GM23248 (cell line): ENCODE measurements at regions of chr1 and their contacts with region 1.

Region 1: DNA sequence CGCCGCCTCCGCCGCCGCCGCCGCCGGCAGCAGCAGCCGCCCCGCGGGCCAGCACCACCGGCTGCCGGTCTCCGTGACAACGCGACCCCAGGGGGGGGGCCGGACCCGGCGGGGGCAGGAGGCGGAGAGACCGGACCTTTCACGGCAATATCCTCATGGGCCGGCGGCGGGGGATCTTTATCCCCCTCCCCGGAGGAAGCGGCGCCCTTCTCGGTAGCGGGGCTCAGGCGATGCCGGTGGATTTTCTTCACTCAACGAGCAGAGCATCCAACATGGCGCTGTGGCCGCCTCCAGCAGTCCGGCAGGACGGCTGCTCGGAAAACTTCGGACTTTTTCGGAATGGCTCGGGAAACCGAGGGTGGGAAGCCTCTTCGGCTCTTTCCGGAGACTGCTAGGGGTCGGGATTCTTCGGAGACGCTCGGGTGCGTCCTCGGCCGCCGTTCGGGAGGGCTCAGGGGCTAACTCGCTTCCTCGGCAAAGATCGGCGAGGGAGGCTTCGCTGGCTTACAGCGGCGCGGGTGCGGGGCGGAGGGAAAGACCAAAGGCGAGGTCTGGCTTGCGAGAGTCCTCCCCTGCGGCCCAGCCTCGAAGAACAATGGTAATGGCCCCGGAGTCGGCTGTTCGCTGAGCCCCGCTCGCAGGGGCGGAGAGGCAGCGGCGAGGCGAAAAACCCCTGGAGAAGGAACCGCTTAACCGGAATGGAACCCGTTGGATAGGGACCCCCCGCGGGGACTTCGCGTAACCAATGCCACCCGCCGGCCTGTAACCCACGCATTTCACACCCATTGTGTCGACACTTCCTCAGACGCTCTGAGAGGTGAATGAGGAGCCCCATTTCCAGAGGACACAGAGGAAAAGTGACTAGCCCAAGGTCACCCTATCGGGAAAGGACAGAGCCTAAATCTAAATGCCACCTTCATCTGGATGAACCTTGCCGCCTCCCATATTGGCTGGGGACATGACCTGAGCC is at the start of gene EIF4G3:
- DNase-seq: peak; percentile 99
- H3K4me3 ChIP-seq: peak within 1 kb of the TSS; percentile 89
- H3K27ac ChIP-seq: peak within 1 kb of the TSS; percentile 87
- H3K4me1 ChIP-seq: peaks cover 8% of the 10 kb centered on the region
- H3K27me3 ChIP-seq: no peaks in the 10 kb centered on the region
- total RNA-seq, gene EIF4G3: 43.1 and 65.5 TPM in 2 replicates

Region 2: GRCh38 chr1:20530906-20531305 is 646.0 kb before region 1 on chr1:
- in situ Hi-C with region 1: loop called (anchors 25 kb)
- DNase-seq: peak; percentile 40
- H3K4me3 ChIP-seq: no peak overlapping the region
- H3K27ac ChIP-seq: no peak overlapping the region
- H3K4me1 ChIP-seq: no peaks in the 10 kb centered on the region
- H3K27me3 ChIP-seq: peaks cover 38% of the 10 kb centered on the region

Region 3: DNA sequence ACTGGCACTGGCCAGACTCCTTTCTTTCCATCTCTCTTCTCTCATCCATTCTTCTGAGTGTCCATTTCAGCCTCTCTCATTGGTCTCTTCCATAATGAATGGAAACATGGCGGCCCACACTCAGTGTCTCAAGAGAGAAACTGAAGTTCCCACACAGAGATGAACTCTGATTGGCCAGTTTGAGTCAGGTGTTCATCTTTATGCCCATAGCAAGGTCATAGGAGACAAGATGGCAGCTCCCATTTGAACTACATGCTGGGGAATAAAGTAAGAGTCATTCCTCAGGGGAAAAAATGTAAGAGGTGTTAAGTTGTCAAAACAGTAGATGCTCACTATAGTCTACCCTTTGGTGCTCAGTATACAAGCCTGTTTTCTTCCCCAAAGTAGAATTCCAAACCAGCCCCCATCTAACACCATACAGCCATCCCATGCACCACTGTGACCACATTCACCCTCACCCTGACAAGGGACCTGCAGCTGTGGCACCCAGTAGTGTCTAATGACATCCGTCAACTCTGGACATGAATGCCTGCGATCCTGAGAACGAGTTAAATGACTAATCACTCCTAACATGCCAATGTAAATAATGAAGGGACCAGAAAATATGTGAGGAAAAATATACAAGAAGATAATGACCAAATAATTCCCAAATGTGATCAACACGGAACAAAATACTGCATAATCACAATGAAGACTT is 575.6 kb before region 1 on chr1:
- in situ Hi-C with region 1: no loop called
- DNase-seq: peak; percentile 51
- H3K4me3 ChIP-seq: no peak overlapping the region
- H3K27ac ChIP-seq: peak overlapping the region; percentile 34; the same call in 1 of the 2 replicates
- H3K4me1 ChIP-seq: peaks cover 43% of the 10 kb centered on the region
- H3K27me3 ChIP-seq: no peaks in the 10 kb centered on the region

Region 4: GRCh38 chr1:20981915-20982314 is 195.0 kb before region 1 on chr1:
- in situ Hi-C with region 1: loop called (anchors 25 kb)
- DNase-seq: peak; percentile 47
- H3K4me3 ChIP-seq: no peak overlapping the region
- H3K27ac ChIP-seq: peak overlapping the region; percentile 21
- H3K4me1 ChIP-seq: peaks cover 20% of the 10 kb centered on the region
- H3K27me3 ChIP-seq: no peaks in the 10 kb centered on the region